ENCODE measurements at regions of chr17 and their contacts with region 1.

Region 1: DNA sequence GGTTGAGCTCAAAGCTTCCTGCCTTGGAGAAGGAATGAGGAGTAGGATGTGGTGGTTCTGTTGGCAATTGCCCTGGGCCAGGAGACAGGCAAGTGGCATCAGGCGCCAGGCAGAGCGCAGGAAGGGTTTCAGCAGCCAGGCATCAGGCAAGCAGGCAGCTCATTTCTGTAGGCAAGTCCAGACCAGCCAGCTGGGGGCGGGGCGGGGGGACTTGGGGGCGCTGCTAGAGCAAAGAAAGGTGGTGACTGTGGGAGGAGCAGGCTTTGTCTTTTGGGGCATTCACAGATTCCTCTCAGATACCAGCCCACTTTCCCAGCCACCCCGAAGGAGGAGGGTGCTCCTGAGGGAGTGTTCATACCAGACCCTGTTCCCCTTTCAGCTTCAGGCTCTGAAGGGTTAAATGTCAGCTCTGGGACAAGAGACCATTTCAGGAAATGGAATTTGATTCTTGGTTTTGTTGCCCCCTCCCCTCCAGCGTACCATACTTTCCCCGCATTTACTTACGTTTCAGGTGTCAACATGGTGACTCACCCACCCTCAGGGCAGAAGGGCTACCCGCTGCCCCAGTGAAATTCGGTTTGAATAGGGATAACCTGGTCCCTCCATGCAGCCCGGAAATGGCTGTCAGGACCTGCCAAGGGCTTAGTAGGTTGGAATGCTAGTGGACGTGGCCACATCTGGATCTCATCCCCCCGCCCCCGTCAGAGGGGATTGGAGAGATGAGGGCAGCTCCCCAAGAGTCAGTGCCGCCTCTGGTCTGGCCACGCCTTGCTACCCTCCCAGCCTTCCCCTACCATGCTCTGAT is 13.2 kb downstream of the NGFR start:
- DNase-seq: no peak
- H3K4me3 ChIP-seq: no peak overlapping the region
- H3K4me3 Mint-ChIP-seq: peak overlapping the region in 1 of 8 donors; percentile 31
- H3K27ac ChIP-seq: no peak overlapping the region
- H3K27ac Mint-ChIP-seq: no peak overlapping the region
- H3K4me1 ChIP-seq: no peaks in the 10 kb centered on the region
- H3K4me1 Mint-ChIP-seq: no peaks in the 10 kb centered on the region
- H3K27me3 ChIP-seq: peaks cover 19% of the 10 kb centered on the region
- H3K27me3 Mint-ChIP-seq: peaks cover 32 to 33% of the 10 kb centered on the region in 2 donors

Region 2: DNA sequence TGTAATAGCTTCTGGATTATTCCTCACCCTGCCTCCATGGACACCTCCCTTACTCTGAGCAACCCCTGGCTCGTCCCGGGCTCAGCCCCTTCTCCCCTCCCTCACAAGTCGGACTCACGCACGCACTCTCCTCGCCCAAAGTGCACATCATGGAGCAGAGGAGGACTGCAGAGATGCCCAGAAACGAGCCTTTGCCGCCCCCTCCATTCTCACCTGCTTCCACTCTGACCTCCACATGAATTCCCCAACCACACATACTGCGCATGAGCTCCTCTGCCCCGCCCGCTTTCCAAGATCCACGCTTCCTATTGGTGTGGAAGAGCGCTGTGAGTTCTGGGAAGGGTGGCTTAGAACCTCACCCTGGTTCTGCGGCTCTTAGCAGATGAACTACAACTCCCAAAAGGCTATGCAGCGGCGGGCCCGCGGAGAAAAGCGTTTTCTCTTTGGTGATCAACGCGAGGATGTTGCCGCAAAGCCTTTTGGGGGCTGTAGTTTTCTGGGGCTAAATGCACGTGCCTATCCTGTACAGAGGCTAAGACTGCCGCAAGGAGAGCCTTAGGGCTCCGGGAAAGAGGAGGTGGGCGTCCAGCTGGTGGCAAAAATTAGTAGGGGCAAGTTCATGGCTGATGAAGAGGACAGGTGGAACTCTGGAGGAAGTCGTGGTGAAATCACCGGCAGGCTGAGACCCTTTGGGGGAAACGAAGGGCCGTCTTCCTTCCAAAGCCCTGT is 93.5 kb before region 1 on chr17 and contains the start of gene PHB1:
- CTCF ChIA-PET with region 1: no interaction called
- POLR2A ChIA-PET with region 1: no interaction called
- intact Hi-C with region 1: no loop called
- DNase-seq: peak; percentile 93 to 99 (median 94)
- H3K4me3 ChIP-seq: peak within 1 kb of the TSS; percentile 81 to 89
- H3K4me3 Mint-ChIP-seq: peak within 1 kb of the TSS; percentile 97 to 99 (median 98)
- H3K27ac ChIP-seq: peak within 1 kb of the TSS; percentile 65
- H3K27ac Mint-ChIP-seq: peak within 1 kb of the TSS; percentile 78 to 99 (median 96)
- H3K4me1 ChIP-seq: peaks cover 18% of the 10 kb centered on the region
- H3K4me1 Mint-ChIP-seq: peaks cover 14 to 27% (median 20%) of the 10 kb centered on the region in 4 donors
- H3K27me3 ChIP-seq: no peaks in the 10 kb centered on the region
- H3K27me3 Mint-ChIP-seq: no peaks in the 10 kb centered on the region
- total RNA-seq, gene PHB1: 62.0 to 64.2 TPM

Region 3: GRCh38 chr17:49471089-49471683 is 37.1 kb before region 1 on chr17:
- CTCF ChIA-PET with region 1: no interaction called
- POLR2A ChIA-PET with region 1: no interaction called
- intact Hi-C with region 1: no loop called
- DNase-seq: no peak
- H3K4me3 ChIP-seq: no peak overlapping the region
- H3K4me3 Mint-ChIP-seq: peak overlapping the region in 1 of 8 donors; percentile 11
- H3K27ac ChIP-seq: no peak overlapping the region
- H3K27ac Mint-ChIP-seq: no peak overlapping the region
- H3K4me1 ChIP-seq: peaks cover 6% of the 10 kb centered on the region
- H3K4me1 Mint-ChIP-seq: peaks cover 0 to 12% (median 8%) of the 10 kb centered on the region in 4 donors
- H3K27me3 ChIP-seq: peaks cover 28% of the 10 kb centered on the region
- H3K27me3 Mint-ChIP-seq: peaks cover 40 to 68% of the 10 kb centered on the region in 2 donors

Region 4: DNA sequence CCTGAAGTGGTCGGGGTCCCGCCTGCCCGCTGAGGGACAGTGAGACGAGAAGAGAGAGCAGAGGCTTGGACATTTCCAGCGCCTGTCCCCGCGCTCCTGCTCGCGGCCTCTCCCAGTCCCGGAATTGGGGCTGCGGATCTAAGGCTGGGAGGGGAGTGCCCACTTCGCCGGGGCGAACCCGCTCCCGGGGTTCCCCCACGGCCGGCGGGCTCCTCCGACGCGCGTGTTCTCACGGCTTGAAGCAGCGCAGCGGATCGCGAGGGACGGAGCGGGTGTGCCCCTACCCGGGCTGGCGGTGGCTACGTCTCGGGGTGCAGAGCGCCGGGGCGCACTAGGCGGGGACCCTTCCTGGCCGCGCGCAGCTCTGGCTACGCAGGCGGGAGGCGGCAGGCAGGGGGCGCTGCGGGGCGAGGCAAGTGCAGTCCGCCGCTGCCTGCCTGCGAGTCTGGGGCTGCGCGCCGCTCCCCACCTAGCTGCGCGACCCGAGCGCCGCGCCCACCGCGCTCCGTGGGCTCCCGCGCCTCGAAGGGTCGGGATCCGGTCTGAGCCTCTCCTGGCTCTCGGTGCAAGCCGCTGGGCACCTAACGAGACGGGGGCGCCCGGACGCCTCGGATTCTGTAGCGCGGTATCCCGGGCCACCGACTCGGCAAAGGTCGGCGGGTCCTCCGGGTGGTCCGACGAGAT is 11.9 kb before region 1 on chr17:
- CTCF ChIA-PET with region 1: interaction called, 25 read pairs
- POLR2A ChIA-PET with region 1: interaction called, 3 read pairs
- intact Hi-C with region 1: no loop called
- DNase-seq: peak; percentile 79 to 84 (median 80)
- H3K4me3 ChIP-seq: peak overlapping the region; percentile 23 to 76
- H3K4me3 Mint-ChIP-seq: peak overlapping the region; percentile 74 to 87 (median 82)
- H3K27ac ChIP-seq: no peak overlapping the region
- H3K27ac Mint-ChIP-seq: peak overlapping the region in 2 of 7 donors; percentile 12 to 25
- H3K4me1 ChIP-seq: peaks cover 34% of the 10 kb centered on the region
- H3K4me1 Mint-ChIP-seq: peaks cover 11 to 41% (median 16%) of the 10 kb centered on the region in 4 donors
- H3K27me3 ChIP-seq: peaks cover 33% of the 10 kb centered on the region
- H3K27me3 Mint-ChIP-seq: peaks cover 32% of the 10 kb centered on the region in 2 donors

Region 5: DNA sequence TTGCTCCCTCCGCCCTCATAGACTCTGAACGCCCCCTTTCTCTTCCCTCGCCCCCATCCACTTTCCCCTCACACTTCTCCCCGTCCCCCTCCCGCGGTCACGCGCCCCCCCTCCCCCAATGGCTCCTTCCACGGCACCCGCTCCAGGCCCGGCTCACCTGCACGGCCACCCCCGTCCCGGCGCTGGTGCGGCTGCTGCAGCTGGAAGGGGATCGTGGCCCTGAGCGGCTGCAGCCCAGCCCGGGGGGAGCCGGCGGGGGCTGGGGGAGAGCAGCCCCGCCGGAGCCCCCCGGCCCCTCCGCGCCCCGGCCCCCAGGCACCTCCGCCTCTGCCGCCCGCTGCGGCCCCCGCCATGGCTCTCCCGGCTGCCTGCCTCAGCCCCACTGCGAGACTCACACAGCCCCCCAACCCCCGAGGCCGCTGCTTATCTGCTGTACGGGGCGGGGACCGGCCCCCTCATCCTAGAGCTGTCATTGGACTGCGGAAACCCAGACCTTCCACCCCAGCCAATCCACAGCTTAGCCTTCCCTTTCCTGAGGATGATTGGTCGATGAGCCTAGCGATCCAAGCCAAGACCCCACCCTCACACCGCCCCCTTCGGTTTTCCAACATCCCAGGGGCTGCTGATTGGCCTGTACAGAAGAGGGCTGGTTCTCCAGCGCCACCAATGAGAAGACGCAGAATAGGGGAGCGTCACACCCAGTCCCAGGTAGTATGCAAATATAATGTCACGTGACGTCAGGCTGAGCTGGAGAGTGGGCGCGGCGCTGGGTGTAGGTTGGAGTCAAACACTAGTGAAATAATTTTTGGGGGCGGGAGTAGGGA is 255.7 kb after region 1 on chr17 and contains the start of gene FAM117A:
- CTCF ChIA-PET with region 1: no interaction called
- POLR2A ChIA-PET with region 1: no interaction called
- intact Hi-C with region 1: no loop called
- DNase-seq: peak; percentile 97 to 100 (median 98)
- H3K4me3 ChIP-seq: peak within 1 kb of the TSS; percentile 38 to 70
- H3K4me3 Mint-ChIP-seq: peak within 1 kb of the TSS; percentile 92 to 98 (median 96)
- H3K27ac ChIP-seq: peak within 1 kb of the TSS; percentile 71
- H3K27ac Mint-ChIP-seq: peak within 1 kb of the TSS; percentile 89 to 98 (median 94)
- H3K4me1 ChIP-seq: peaks cover 46% of the 10 kb centered on the region
- H3K4me1 Mint-ChIP-seq: peaks cover 40 to 60% (median 45%) of the 10 kb centered on the region in 4 donors
- H3K27me3 ChIP-seq: no peaks in the 10 kb centered on the region
- H3K27me3 Mint-ChIP-seq: no peaks in the 10 kb centered on the region
- total RNA-seq, gene FAM117A: 95.1 to 102 TPM